HEK293 (cell line): ENCODE measurements at regions of chr12 and their contacts with region 1.

Region 1: DNA sequence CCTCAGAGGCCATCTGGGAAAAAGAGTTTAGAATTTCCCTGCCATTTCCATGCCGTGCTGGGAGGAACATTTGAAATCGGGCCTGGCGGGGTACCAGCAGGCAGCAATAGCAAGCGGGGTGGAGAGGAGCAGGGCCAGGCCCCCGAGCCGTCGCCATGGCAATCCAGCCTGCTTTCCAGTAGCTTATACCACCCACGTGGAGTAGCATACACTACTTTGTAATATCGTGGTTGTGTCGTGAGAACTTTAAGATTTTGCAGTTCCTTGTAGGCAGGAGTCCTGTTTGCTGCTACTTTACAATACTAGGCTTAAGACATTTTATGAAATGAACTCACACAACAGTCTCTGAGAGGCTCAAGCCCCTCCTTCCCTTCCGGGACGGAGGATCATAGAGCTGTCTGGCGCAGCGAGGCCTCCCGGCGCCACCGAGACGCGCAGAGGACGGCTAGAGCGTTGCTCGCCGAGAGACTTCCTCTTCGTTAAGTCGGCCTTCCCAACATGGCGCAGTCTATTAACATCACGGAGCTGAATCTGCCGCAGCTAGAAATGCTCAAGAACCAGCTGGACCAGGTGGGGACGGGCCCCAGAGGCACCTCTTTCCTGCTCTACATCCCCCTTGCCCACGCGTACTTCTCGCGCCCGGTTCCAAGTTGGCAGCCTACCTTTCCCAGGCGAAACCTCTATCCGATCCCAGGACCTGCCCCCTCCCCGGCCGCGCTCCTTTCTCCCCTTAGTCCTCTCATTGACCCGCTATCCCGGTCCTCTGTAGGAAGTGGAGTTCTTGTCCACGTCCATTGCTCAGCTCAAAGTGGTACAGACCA is at the start of gene PFDN5:
- H3K4me3 ChIP-seq: peak within 1 kb of the TSS; percentile 73
- H3K27ac ChIP-seq: peak within 1 kb of the TSS; percentile 61
- H3K4me1 ChIP-seq: peaks cover 4% of the 10 kb centered on the region
- CTCF ChIP-seq: no peak

Region 2: GRCh38 chr12:53308276-53308675 is 13.0 kb after region 1 on chr12:
- CTCF ChIA-PET with region 1: no interaction called
- POLR2A ChIA-PET with region 1: interaction called, 13 read pairs
- H3K4me3 ChIP-seq: no peak overlapping the region
- H3K27ac ChIP-seq: no peak overlapping the region
- H3K4me1 ChIP-seq: no peaks in the 10 kb centered on the region
- CTCF ChIP-seq: no peak